ENCODE measurements at regions of chrX and their contacts with region 1.

Region 1: GRCh38 chrX:136397001-136397400 is 90.7 kb upstream of the BRS3 start:
- DNase-seq: peak; percentile 85
- ATAC-seq: peak; percentile 79
- H3K4me3 ChIP-seq: no peak overlapping the region
- H3K27ac ChIP-seq: peak overlapping the region; percentile 29; the same call in 1 of the 2 replicates
- H3K4me1 ChIP-seq: peaks cover 29% of the 10 kb centered on the region
- H3K27me3 ChIP-seq: no peaks in the 10 kb centered on the region
- CTCF ChIP-seq: peak; percentile 61

Region 2: DNA sequence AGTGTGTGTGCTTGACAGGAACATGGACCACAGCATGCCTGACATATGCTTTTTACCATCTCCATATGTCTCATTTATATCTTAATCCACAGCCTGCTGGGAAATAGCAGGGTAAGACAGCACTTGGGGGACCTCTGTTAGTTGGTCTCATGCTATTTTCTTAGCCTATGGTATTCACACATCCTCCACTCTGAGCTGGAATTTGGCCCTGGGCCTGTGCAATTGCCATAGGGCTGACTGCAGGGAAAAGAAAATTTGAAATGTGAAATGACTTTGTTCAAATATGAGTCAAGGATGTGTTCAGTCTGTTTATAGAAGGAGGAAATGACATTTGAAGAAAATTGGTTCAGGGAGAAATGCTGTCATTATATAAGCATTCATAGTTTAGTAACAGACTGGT is 136.2 kb before region 1 on chrX:
- CTCF ChIA-PET with region 1: no interaction called
- POLR2A ChIA-PET with region 1: no interaction called
- intact Hi-C with region 1: loop called (anchors 2 kb)
- DNase-seq: peak; percentile 87
- ATAC-seq: peak; percentile 93
- H3K4me3 ChIP-seq: no peak overlapping the region
- H3K27ac ChIP-seq: peak overlapping the region; percentile 95
- H3K4me1 ChIP-seq: peaks cover 32% of the 10 kb centered on the region
- H3K27me3 ChIP-seq: no peaks in the 10 kb centered on the region
- CTCF ChIP-seq: no peak

Region 3: GRCh38 chrX:136353519-136354095 is 43.4 kb before region 1 on chrX:
- CTCF ChIA-PET with region 1: no interaction called
- POLR2A ChIA-PET with region 1: no interaction called
- intact Hi-C with region 1: loop called (anchors 5 kb)
- DNase-seq: peak; percentile 94
- ATAC-seq: peak; percentile 97
- H3K4me3 ChIP-seq: 0 out of 2 replicates have a peak overlapping the region, but pooled peaks have one; percentile 18
- H3K27ac ChIP-seq: peak overlapping the region; percentile 80
- H3K4me1 ChIP-seq: peaks cover 29% of the 10 kb centered on the region
- H3K27me3 ChIP-seq: no peaks in the 10 kb centered on the region
- CTCF ChIP-seq: no peak

Region 4: DNA sequence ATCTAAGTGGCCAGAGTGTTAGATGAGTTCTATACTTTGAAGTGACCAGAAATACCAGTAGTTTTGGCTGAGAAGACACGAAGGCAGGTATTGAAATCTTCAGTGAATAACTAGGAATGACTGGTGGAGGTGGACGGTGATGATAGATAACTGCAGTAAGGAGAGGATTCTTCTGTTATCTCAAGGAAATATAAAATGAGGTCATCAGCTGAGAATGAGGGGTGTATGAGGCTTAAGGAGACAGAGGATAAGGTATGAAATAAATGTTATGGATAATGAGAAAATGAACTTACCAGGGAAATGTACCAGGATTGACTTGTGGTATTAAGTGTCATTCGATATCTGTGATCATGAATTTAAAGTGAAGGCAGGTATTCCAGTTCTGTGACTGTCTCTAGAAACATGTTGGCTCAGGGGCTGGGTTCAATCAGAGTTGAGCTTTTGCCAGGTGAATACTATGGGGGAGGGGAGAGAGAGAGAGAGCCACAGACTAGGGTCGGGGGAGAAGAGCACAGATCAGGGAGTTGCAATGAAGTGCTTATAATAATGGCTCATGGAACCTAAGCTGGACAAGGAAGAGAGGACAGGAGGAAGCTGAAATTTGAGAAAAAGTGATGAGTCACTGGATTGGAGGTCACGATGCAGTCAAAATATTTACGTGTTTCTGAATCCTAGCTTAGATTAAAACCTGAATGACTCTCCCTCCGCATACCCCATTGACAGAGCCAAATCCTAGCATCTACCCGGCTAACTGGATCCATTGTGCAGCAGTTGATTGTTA is 53.2 kb after region 1 on chrX:
- CTCF ChIA-PET with region 1: no interaction called
- POLR2A ChIA-PET with region 1: no interaction called
- intact Hi-C with region 1: loop called (anchors 1 kb)
- DNase-seq: peak; percentile 62
- ATAC-seq: peak; percentile 33
- H3K4me3 ChIP-seq: peak overlapping the region; percentile 43; the same call in 1 of the 2 replicates
- H3K27ac ChIP-seq: peak overlapping the region; percentile 55; the same call in 1 of the 2 replicates
- H3K4me1 ChIP-seq: peaks cover 45% of the 10 kb centered on the region
- H3K27me3 ChIP-seq: no peaks in the 10 kb centered on the region
- CTCF ChIP-seq: no peak

Region 5: GRCh38 chrX:136488706-136489105 is 91.7 kb after region 1 on chrX:
- CTCF ChIA-PET with region 1: no interaction called
- POLR2A ChIA-PET with region 1: no interaction called
- intact Hi-C with region 1: loop called (anchors 1 kb)
- DNase-seq: peak; percentile 42
- ATAC-seq: peak; percentile 49; the same call in 1 of the 2 replicates
- H3K4me3 ChIP-seq: 0 out of 2 replicates have a peak overlapping the region, but pooled peaks have one; percentile 18
- H3K27ac ChIP-seq: no peak overlapping the region
- H3K4me1 ChIP-seq: 0 out of 2 replicates have a peak, but pooled peaks cover 5% of the 10 kb centered on the region
- H3K27me3 ChIP-seq: no peaks in the 10 kb centered on the region; the same call in 1 of the 2 replicates
- CTCF ChIP-seq: peak; percentile 55

Region 6: GRCh38 chrX:136577552-136577951 is 180.6 kb after region 1 on chrX:
- CTCF ChIA-PET with region 1: interaction called, 3 read pairs
- POLR2A ChIA-PET with region 1: no interaction called
- intact Hi-C with region 1: loop called (anchors 1 kb)
- DNase-seq: peak; percentile 69
- ATAC-seq: peak; percentile 99
- H3K4me3 ChIP-seq: no peak overlapping the region
- H3K27ac ChIP-seq: no peak overlapping the region
- H3K4me1 ChIP-seq: peaks cover 12% of the 10 kb centered on the region; the same call in 1 of the 2 replicates
- H3K27me3 ChIP-seq: no peaks in the 10 kb centered on the region
- CTCF ChIP-seq: peak; percentile 76

Measured in PC-3 (cell line).